ENCODE measurements at regions of chr1 and their contacts with region 1.

Region 1: GRCh38 chr1:109099938-109100773 is 9.6 kb downstream of the TMEM167B start:
- DNase-seq: peak; percentile 97
- H3K4me3 Mint-ChIP-seq: peak overlapping the region; percentile 99
- H3K27ac Mint-ChIP-seq: peak overlapping the region; percentile 94
- H3K4me1 Mint-ChIP-seq: peaks cover 12% of the 10 kb centered on the region
- H3K27me3 Mint-ChIP-seq: no peaks in the 10 kb centered on the region

Region 2: GRCh38 chr1:108767115-108767514 is 333.0 kb before region 1 on chr1:
- CTCF ChIA-PET with region 1: no interaction called
- POLR2A ChIA-PET with region 1: no interaction called
- DNase-seq: no peak
- H3K4me3 Mint-ChIP-seq: no peak overlapping the region
- H3K27ac Mint-ChIP-seq: no peak overlapping the region
- H3K4me1 Mint-ChIP-seq: no peaks in the 10 kb centered on the region
- H3K27me3 Mint-ChIP-seq: no peaks in the 10 kb centered on the region

Region 3: DNA sequence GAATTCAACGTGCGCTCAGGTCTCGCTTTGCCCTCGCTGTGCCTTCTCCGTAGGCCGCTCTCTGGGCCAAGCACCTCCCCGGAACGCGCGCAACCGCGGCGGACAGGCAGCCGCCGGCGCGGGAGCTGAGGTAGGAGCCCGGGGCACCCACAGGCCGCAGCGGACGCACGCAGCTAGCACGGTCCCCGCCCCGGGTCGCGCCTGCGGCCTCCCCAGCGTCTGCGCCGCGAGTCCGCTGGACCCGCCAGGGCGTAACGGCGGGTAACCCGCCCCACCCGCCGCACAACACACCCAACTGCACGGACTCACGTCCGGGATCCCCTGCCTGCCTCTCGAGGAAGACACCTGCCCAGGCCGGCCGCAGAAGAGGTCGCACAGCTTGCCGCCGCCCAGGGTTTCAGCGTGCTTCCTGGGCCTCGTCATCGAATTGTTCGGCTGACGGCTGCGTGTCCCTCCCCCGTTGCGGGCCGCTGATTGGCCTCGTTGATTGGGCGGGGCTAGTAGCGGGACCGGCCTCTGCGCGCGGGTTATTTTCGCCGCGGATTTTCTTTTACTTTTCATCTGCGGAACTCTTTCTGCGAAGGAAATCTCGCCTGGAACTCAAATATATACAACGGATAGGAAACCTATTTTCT is 137.0 kb before region 1 on chr1 and contains the start of gene CLCC1:
- CTCF ChIA-PET with region 1: interaction called, 6 read pairs
- POLR2A ChIA-PET with region 1: interaction called, 11 read pairs
- DNase-seq: peak; percentile 96
- H3K4me3 Mint-ChIP-seq: peak within 1 kb of the TSS; percentile 82
- H3K27ac Mint-ChIP-seq: peak within 1 kb of the TSS; percentile 93
- H3K4me1 Mint-ChIP-seq: peaks cover 42% of the 10 kb centered on the region
- H3K27me3 Mint-ChIP-seq: no peaks in the 10 kb centered on the region
- total RNA-seq, gene CLCC1: 16.4 to 20.1 TPM

Region 4: DNA sequence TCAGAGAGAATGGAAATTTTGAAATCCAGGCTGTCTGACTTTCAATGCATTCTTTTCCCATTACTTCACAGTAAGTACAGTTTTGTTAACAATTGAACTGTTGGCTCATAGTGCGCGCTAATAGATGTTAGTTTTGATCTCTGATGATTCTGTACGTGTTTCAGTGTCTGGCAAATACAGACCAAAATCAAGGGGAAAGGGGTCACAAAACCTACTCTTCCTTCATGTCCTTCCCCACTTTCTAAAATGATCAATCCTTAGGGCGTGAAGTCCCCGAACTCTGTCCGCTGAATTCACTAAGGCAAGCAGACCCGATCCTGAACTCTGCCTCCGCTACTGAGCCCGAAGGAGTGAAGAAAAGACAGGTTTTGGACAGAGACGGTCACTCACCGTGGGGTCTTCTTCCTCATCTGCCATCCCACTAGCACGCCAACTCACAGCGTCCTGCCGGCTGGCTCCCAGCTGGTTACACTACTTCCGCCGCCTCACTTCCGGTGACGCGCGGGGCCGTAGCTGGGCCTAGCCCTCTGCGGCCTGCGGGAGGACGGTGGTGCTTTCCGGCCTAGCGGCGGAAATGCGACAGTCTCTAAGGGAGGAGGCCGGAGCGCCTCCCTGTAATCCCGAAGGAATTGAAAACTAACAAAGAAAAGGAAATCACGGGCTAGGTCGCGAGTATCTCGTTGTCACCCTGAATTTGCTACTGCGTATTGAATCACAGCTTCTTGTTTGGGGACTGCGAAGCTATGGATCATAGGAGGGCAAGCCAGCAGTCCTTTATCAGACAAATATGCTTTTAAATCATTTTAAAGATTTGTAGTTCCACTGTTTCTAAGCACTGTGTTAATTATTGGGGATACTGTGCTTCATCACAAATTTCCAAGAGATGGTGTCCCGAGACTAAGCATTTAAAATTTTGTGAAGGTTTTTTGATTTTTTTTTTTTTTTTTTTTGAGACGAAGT is 24.3 kb before region 1 on chr1 and contains the start of gene TAF13:
- CTCF ChIA-PET with region 1: interaction called, 23 read pairs
- POLR2A ChIA-PET with region 1: interaction called, 24 read pairs
- DNase-seq: peak; percentile 92
- H3K4me3 Mint-ChIP-seq: peak within 1 kb of the TSS; percentile 95
- H3K27ac Mint-ChIP-seq: peak within 1 kb of the TSS; percentile 84
- H3K4me1 Mint-ChIP-seq: peaks cover 27% of the 10 kb centered on the region
- H3K27me3 Mint-ChIP-seq: no peaks in the 10 kb centered on the region
- total RNA-seq, gene TAF13: 25.2 to 26.5 TPM

Region 5: DNA sequence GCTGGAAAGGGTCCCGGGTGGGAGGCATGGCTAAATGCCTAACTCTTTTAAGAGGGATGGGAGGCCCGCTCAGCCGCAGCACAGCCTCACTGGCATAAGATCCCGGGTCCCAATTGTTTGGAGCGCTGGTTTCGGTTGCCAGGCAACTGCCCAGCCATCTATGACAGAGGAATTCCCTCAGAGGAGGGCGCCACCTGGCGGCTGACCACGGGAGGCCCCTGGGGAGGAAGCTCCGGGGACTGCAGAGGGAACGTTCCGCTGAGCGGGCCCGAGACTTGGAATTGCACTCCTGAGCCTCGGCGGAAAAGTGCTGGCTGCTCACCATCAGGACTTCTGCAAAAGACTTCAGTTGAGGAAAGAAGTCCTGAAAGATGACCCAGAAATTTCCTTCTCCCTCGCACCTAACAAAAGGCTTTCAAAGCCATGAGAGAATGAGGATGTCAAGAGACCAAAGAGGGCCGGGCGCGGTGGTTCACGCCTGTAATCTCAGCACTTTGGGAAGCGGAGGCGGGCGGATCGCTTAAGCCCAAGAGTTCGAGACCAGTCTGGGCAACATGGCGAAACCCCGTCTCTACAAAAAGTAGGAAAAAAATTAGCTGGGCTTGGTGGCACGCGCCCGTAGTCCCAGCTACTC is 12.6 kb after region 1 on chr1:
- CTCF ChIA-PET with region 1: interaction called, 58 read pairs
- POLR2A ChIA-PET with region 1: interaction called, 92 read pairs
- DNase-seq: peak; percentile 89
- H3K4me3 Mint-ChIP-seq: peak overlapping the region; percentile 74
- H3K27ac Mint-ChIP-seq: peak overlapping the region; percentile 55
- H3K4me1 Mint-ChIP-seq: peaks cover 37% of the 10 kb centered on the region
- H3K27me3 Mint-ChIP-seq: peaks cover 42% of the 10 kb centered on the region

Region 6: GRCh38 chr1:109193653-109194590 is 93.8 kb after region 1 on chr1:
- CTCF ChIA-PET with region 1: interaction called, 11 read pairs
- POLR2A ChIA-PET with region 1: interaction called, 8 read pairs
- DNase-seq: peak; percentile 68
- H3K4me3 Mint-ChIP-seq: no peak overlapping the region
- H3K27ac Mint-ChIP-seq: no peak overlapping the region
- H3K4me1 Mint-ChIP-seq: peaks cover 11% of the 10 kb centered on the region
- H3K27me3 Mint-ChIP-seq: no peaks in the 10 kb centered on the region